OCI-LY7 (cell line): ENCODE measurements at regions of chr20 and their contacts with region 1.

Region 1: GRCh38 chr20:46406199-46406985 is at the start of gene ELMO2:
- DNase-seq: peak; percentile 96
- H3K4me3 ChIP-seq: peak within 1 kb of the TSS; percentile 83
- H3K27ac ChIP-seq: no peak within 1 kb of the TSS
- H3K4me1 ChIP-seq: peaks cover 36% of the 10 kb centered on the region
- CTCF ChIP-seq: no peak
- total RNA-seq, gene ELMO2: 16.0 and 18.9 TPM in 2 replicates

Region 2: GRCh38 chr20:46363800-46364634 is 42.4 kb before region 1 on chr20:
- CTCF ChIA-PET with region 1: no interaction called
- POLR2A ChIA-PET with region 1: no interaction called
- intact Hi-C with region 1: loop called (anchors 2 kb)
- DNase-seq: peak; percentile 90
- H3K4me3 ChIP-seq: peak overlapping the region; percentile 88
- H3K27ac ChIP-seq: peak overlapping the region; percentile 88
- H3K4me1 ChIP-seq: peaks cover 22% of the 10 kb centered on the region
- CTCF ChIP-seq: no peak

Region 3: DNA sequence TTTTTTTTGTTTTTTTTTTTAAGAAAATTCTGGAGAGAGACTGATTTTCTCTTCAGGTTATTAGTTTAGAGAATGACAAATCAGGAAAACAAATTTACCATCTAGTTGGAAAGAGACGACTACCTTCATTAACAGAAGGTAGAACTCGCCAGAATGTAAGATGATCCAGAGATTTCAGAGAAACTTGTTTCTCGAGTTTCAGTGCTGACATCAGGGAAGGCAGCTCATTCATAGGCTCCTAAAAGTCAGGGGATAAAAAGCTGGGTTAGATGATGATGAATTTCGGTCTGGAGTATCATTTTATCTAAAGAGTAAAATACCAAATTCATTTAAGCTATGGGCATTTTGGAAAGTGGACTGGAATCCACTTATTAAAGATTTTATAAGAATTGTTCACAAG is 79.0 kb after region 1 on chr20:
- CTCF ChIA-PET with region 1: no interaction called
- POLR2A ChIA-PET with region 1: no interaction called
- intact Hi-C with region 1: no loop called
- DNase-seq: no peak
- H3K4me3 ChIP-seq: no peak overlapping the region
- H3K27ac ChIP-seq: no peak overlapping the region
- H3K4me1 ChIP-seq: no peaks in the 10 kb centered on the region
- CTCF ChIP-seq: no peak